ENCODE measurements at regions of chr5 and their contacts with region 1.

Region 1: DNA sequence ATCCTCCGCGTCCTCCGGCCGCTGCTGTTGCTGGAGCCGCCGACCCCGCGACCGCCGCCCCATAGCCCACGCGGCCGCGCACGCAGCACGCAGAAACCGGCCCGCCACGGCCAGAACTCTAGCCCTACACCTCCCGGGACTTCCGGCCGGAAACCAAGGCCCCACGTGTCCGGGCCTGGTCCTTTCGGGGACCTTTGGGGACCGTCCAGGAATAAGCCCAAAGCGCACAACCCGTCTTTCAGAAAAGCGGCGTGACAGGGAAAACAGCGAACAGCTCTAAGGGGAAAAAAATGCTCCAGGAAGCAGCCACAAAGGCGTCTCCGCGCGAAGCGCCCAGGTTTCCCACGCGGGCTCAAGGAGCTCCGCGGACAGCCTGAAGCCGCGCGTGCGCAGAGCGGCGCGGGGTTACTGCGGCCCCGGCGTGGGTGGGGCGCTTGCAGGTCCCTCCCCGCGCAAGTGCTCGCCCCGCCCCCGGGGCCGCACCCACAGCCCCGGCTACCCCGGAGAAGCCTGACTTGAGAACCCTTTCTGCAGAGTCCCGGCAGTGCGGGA is at the starts of genes NSUN2 and SRD5A1:
- DNase-seq: peak; percentile 92 to 96 (median 92)
- ATAC-seq: peak; percentile 97 to 99 (median 98)
- H3K4me3 ChIP-seq: peak within 1 kb of the TSS; percentile 75 to 99 (median 94)
- H3K27ac ChIP-seq: peak within 1 kb of the TSS; percentile 92 to 99 (median 97)
- H3K4me1 ChIP-seq: peaks cover 0 to 38% (median 25%) of the 10 kb centered on the region in 12 donors
- H3K27me3 ChIP-seq: no peaks in the 10 kb centered on the region
- CTCF ChIP-seq: no peak
- POLR2A ChIP-seq: peak in 1 of 2 donors; percentile 46
- total RNA-seq, gene NSUN2: 25.1 to 42.6 (median 34.0) TPM
- total RNA-seq, gene SRD5A1: 2.3 to 6.7 (median 4.0) TPM

Region 2: DNA sequence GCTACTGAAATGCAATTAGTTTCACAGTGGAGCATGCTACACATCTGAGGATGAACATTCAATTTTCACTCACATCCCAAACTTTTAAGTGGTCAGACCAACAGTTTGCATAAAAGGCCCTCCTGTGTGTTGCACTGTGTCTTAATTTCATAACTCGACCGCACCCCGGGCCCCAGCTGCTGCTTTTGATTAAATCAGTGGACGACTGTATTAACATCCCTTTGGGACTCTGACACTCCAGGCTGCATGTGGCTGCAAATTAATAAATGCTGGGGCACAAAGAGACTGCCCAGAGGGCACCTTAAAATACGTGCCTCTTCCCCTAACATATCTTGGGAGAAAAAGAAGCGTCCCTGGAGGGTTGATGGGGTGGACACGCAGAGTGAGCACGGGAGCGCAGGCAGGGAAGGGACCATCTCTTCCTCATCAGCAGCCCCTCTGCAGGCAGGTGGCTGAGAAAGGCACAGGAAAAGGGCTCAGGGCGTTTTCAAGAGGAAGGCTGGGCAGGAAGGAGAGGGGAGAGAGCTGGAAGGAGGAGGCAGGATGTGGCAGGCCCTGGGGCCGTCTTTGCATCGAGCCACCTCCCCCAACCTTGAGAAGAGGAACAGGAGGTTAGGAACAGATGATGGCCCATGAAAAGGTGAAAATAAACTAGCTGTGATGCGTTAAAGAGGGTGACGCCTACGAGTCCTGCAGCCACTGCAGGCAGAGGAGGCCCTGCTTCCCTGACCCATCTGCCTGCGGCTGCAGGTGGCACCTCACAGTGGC is 273.3 kb before region 1 on chr5:
- intact Hi-C with region 1: no loop called
- DNase-seq: no peak
- ATAC-seq: no peak
- H3K4me3 ChIP-seq: no peak overlapping the region
- H3K27ac ChIP-seq: no peak overlapping the region
- H3K4me1 ChIP-seq: no peaks in the 10 kb centered on the region
- H3K27me3 ChIP-seq: no peaks in the 10 kb centered on the region
- CTCF ChIP-seq: no peak
- POLR2A ChIP-seq: no peak

Region 3: GRCh38 chr5:6704361-6704851 is 71.4 kb after region 1 on chr5:
- intact Hi-C with region 1: loop called in 1 of 10 experiments (anchors 5 kb)
- DNase-seq: peak; percentile 73 to 90 (median 84)
- ATAC-seq: peak; percentile 94 to 97 (median 96)
- H3K4me3 ChIP-seq: no peak overlapping the region
- H3K27ac ChIP-seq: peak overlapping the region; percentile 72 to 93 (median 88)
- H3K4me1 ChIP-seq: peaks cover 4 to 25% (median 19%) of the 10 kb centered on the region in 12 donors
- H3K27me3 ChIP-seq: peaks cover 0 to 2% (median 0%) of the 10 kb centered on the region in 9 donors
- CTCF ChIP-seq: no peak
- POLR2A ChIP-seq: no peak

Region 4: DNA sequence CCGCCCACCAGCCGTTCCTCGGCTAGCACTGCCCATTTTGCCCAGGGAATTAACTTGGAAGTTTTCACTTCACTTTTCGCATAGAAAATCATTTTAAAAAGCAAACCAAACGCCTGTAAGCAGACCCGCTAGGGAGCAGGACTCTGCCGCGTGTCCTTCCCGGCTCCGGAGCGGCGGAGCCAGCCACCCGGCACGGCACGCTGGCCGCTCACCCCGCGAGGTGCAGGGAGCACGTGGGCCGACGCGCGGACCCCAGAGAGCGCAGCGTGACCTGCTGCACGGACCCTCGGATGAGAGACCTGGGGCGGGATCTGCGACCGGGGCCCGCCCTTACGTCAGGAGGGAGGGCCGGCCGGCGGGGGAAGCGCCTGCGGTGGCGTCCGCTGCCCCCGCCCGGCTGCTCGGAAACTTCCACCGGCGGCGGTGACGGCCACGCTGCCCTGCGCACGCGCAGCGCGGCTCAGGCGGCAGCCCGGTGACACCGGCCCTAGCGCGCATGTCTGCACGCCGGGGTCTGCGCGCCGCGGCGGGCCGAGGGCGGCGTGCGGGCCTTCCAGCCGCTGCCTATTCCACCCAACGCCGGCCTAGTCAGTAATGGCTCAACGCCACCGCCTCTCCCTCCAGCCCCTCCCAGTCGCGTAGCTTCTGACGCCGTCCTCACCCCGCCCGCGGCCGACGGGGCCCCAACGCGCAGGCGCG is 79.7 kb after region 1 on chr5:
- intact Hi-C with region 1: loop called in 9 of 10 experiments (anchors 1 to 10 kb)
- DNase-seq: peak; percentile 97 to 99 (median 97)
- ATAC-seq: peak; percentile 86 to 94 (median 90)
- H3K4me3 ChIP-seq: peak overlapping the region; percentile 46 to 98 (median 78)
- H3K27ac ChIP-seq: peak overlapping the region; percentile 89 to 100 (median 98)
- H3K4me1 ChIP-seq: peaks cover 9 to 48% (median 34%) of the 10 kb centered on the region in 12 donors
- H3K27me3 ChIP-seq: no peaks in the 10 kb centered on the region
- CTCF ChIP-seq: peak in 1 of 12 donors; percentile 3
- POLR2A ChIP-seq: peak in 1 of 2 donors; percentile 84

Region 5: DNA sequence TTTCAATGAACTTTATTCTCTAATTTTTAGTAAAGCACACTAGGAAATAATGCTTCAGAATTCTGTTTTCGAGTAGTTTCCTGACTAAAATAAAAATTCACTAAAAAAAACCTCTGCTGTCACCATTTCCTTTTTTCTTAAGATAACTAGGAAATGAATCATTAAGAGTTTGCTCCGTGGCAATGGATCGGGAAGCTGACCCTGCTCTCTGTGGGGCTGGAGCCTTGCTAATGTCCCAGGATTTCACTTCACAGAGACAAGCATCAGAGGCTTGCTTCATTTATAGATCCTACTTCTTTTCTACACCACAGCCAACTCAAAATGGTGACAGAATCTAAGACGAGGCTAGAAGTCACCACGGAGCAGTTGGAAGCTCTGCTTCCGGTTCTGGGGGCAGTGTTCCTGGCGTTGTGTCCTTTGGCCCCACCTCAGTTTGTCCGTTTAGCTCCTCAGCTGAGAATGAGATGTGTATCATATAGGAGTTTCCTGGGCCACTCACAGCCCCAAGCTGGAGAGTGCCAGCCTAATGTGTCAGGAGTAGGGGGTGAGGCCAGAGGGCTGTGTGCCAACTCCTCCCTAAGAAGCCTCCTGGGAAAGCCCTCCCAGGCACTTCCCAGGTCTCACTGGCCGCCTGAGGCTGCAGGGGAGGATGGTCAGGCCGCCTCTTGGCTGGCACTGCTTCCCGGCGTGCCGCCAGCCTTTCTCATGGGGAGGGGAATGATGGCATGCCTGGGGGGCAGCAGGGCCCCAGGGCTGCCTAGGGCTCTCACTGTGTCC is 99.8 kb after region 1 on chr5:
- intact Hi-C with region 1: loop called in 2 of 10 experiments (anchors 5 kb)
- DNase-seq: peak; percentile 42 to 78 (median 58)
- ATAC-seq: peak; percentile 32 to 72 (median 66)
- H3K4me3 ChIP-seq: peak overlapping the region in 9 of 12 donors; percentile 15 to 33 (median 19)
- H3K27ac ChIP-seq: peak overlapping the region; percentile 43 to 91 (median 70)
- H3K4me1 ChIP-seq: peaks cover 18 to 87% (median 68%) of the 10 kb centered on the region in 12 donors
- H3K27me3 ChIP-seq: no peaks in the 10 kb centered on the region
- CTCF ChIP-seq: no peak
- POLR2A ChIP-seq: no peak

Region 6: DNA sequence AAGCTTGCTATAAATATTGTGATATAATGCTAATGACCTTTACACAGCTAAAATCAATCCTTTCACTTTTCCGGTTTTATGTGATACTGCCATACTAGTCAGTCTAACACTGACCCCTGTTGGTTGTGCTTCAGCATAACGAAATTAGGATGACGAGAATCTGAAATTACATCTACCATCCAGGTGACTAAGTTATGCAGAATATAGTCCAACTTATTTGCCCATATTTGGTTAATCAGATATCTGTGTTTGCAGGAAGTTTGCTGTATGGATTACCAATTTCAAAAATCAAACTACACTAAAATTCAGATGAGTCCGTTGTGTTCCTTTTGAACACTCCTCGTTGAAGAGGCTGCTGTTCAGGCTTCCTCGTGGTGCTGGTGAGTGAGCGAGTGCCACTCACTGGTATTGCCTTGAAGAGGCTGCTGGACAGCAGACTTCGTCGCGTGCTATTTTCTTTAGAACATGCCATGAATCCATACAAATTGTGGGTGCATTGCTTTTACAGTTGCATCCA is 112.8 kb after region 1 on chr5:
- intact Hi-C with region 1: loop called (anchors 1 to 5 kb)
- DNase-seq: no peak
- ATAC-seq: peak; percentile 50 to 78 (median 58)
- H3K4me3 ChIP-seq: no peak overlapping the region
- H3K27ac ChIP-seq: peak overlapping the region in 6 of 12 donors; percentile 15 to 56 (median 26)
- H3K4me1 ChIP-seq: peaks cover 0 to 14% (median 8%) of the 10 kb centered on the region in 12 donors
- H3K27me3 ChIP-seq: no peaks in the 10 kb centered on the region
- CTCF ChIP-seq: peak; percentile 61 to 86 (median 76)
- POLR2A ChIP-seq: no peak

Region 7: GRCh38 chr5:6765612-6766525 is 132.9 kb after region 1 on chr5:
- intact Hi-C with region 1: no loop called
- DNase-seq: peak; percentile 68 to 86 (median 73)
- ATAC-seq: peak; percentile 53 to 82 (median 71)
- H3K4me3 ChIP-seq: peak overlapping the region in 2 of 12 donors; percentile 15 to 28
- H3K27ac ChIP-seq: peak overlapping the region in 6 of 12 donors; percentile 36 to 82 (median 48)
- H3K4me1 ChIP-seq: peaks cover 0 to 31% (median 9%) of the 10 kb centered on the region in 12 donors
- H3K27me3 ChIP-seq: no peaks in the 10 kb centered on the region
- CTCF ChIP-seq: peak; percentile 60 to 85 (median 74)
- POLR2A ChIP-seq: no peak

Measured in heart left ventricle (tissue), 16 donors.